CD8-positive, alpha-beta memory T cell (primary cell): ENCODE measurements at regions of chr6 and their contacts with region 1.

Region 1: GRCh38 chr6:11653028-11653583 is 115.6 kb downstream of the TMEM170B start:
- DNase-seq: no peak
- H3K4me3 ChIP-seq: no peak overlapping the region
- H3K4me3 Mint-ChIP-seq: no peak overlapping the region
- H3K27ac ChIP-seq: no peak overlapping the region
- H3K27ac Mint-ChIP-seq: no peak overlapping the region
- H3K4me1 ChIP-seq: no peaks in the 10 kb centered on the region
- H3K4me1 Mint-ChIP-seq: peaks cover 0 to 5% (median 4%) of the 10 kb centered on the region in 3 donors
- H3K27me3 ChIP-seq: peaks cover 4% of the 10 kb centered on the region
- H3K27me3 Mint-ChIP-seq: peaks cover 6 to 30% of the 10 kb centered on the region in 2 donors

Region 2: DNA sequence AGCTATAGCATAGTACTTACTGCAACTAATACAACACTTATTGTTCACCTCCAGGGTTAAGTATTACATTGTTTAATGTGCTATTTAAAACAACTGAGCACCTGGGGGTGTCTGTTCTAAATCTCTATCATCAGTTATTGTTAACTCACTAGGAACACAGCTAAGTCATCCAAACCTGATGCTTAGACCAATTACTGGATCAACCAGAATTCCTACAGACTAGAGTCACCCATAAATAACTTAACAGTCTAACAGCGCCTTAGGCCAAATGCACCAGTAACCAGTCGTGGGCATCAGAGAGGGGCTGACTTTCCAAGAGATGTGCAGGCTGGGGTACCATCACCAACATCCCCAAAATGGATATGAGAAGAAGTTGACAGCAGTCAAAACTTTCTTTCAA is 14.8 kb after region 1 on chr6:
- CTCF ChIA-PET with region 1: interaction called, 16 read pairs
- POLR2A ChIA-PET with region 1: no interaction called
- DNase-seq: no peak
- H3K4me3 ChIP-seq: no peak overlapping the region
- H3K4me3 Mint-ChIP-seq: no peak overlapping the region
- H3K27ac ChIP-seq: no peak overlapping the region
- H3K27ac Mint-ChIP-seq: no peak overlapping the region
- H3K4me1 ChIP-seq: no peaks in the 10 kb centered on the region
- H3K4me1 Mint-ChIP-seq: no peaks in the 10 kb centered on the region
- H3K27me3 ChIP-seq: peaks cover 7% of the 10 kb centered on the region
- H3K27me3 Mint-ChIP-seq: peaks cover 19 to 57% of the 10 kb centered on the region in 2 donors

Region 3: GRCh38 chr6:12233693-12234571 is 580.8 kb after region 1 on chr6:
- CTCF ChIA-PET with region 1: interaction called, 28 read pairs
- POLR2A ChIA-PET with region 1: no interaction called
- DNase-seq: peak in 3 of 5 donors; percentile 43 to 60 (median 48)
- H3K4me3 ChIP-seq: no peak overlapping the region
- H3K4me3 Mint-ChIP-seq: peak overlapping the region in 3 of 7 donors; percentile 32 to 77 (median 55)
- H3K27ac ChIP-seq: no peak overlapping the region
- H3K27ac Mint-ChIP-seq: peak overlapping the region in 3 of 8 donors; percentile 27 to 84 (median 73)
- H3K4me1 ChIP-seq: peaks cover 16% of the 10 kb centered on the region
- H3K4me1 Mint-ChIP-seq: peaks cover 19 to 23% (median 22%) of the 10 kb centered on the region in 3 donors
- H3K27me3 ChIP-seq: no peaks in the 10 kb centered on the region
- H3K27me3 Mint-ChIP-seq: no peaks in the 10 kb centered on the region